ENCODE measurements at regions of chr20 and their contacts with region 1.

Region 1: DNA sequence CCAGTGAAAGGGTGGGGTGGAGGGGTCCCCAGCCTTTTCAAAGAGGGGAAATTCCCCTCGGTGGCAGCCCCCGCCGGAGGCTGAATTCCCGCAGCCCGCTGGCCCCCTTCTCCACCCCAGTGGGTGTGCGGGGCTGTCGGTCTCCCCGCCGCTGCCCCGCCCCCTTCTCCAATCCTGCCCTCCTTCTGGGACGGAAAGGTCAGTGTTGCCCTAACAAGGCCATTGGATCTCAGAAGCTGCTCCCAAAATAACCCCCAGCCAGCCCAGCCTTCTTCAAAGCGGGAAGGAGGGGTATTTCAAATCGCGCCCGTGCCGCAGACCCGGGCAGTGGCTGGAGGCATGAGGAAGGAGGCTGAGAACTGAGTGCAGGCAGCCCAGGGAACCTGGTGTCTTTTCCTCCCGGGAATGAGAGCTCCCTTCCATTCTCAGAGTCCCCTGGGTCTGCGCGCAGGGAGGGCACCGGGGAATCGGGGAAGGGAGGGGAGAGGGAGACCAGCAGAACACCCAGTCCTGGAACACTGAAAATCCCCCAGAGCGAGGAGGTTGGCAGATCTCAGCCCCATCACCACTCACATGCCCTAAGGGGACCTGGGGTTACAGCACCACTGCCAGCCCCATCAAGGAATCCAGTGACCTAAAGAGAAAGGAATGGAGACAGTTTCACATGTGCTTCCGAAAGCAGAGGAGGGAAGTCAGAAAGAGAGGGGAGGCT is at the start of gene JPH2:
- DNase-seq: peak; percentile 44
- H3K4me3 Mint-ChIP-seq: peak within 1 kb of the TSS; percentile 63
- H3K27ac Mint-ChIP-seq: no peak within 1 kb of the TSS
- H3K4me1 Mint-ChIP-seq: peaks cover 16% of the 10 kb centered on the region
- H3K27me3 Mint-ChIP-seq: peaks cover 15% of the 10 kb centered on the region
- CTCF ChIP-seq: no peak
- total RNA-seq, gene JPH2: 0.50 and 0.59 TPM in 2 replicates

Region 2: GRCh38 chr20:43691928-43692524 is 495.2 kb before region 1 on chr20:
- CTCF ChIA-PET with region 1: no interaction called
- intact Hi-C with region 1: no loop called
- DNase-seq: peak; percentile 83
- H3K4me3 Mint-ChIP-seq: no peak overlapping the region
- H3K27ac Mint-ChIP-seq: no peak overlapping the region
- H3K4me1 Mint-ChIP-seq: no peaks in the 10 kb centered on the region
- H3K27me3 Mint-ChIP-seq: no peaks in the 10 kb centered on the region
- CTCF ChIP-seq: peak; percentile 85

Region 3: DNA sequence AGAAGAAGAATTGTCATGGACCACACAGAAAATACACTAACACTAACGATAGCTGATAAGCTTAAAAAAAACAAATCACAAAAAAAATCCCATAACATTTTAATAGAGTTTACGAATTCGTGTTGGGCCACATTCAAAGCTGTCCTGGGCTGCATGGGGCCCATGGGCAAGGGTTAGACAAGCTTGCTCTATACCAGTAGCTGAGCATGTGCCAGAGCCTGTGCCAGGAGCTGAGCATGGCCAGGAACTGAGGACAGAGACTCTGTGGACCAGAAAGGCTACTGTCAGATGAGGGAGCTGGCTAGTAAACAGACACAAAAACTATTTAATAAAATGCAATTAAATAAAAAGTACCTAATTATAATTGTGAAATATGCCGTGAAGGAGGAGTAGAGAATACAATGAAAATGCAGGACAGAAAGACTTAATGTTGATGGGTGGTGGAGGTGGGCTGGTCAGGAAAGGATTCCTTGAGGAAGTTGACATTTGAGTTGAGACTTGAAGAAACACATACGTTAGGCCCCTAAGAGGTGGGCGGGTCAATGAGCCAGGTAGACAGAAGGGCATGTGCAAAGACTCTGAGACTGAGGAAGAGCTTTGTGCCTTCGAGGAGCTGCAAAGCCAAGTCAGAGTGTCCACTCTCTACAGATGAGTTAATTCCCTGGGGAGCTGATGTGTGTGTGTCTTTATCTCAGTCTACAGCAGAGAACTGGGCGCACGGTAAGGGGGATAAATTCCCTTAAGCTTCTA is 66.4 kb before region 1 on chr20:
- CTCF ChIA-PET with region 1: interaction called, 133 read pairs
- intact Hi-C with region 1: loop called (anchors 1 kb)
- DNase-seq: no peak
- H3K4me3 Mint-ChIP-seq: no peak overlapping the region
- H3K27ac Mint-ChIP-seq: no peak overlapping the region
- H3K4me1 Mint-ChIP-seq: no peaks in the 10 kb centered on the region
- H3K27me3 Mint-ChIP-seq: peaks cover 63% of the 10 kb centered on the region
- CTCF ChIP-seq: no peak

Region 4: GRCh38 chr20:44176833-44177534 is 10.2 kb before region 1 on chr20:
- CTCF ChIA-PET with region 1: interaction called, 14 read pairs
- intact Hi-C with region 1: no loop called
- DNase-seq: peak; percentile 78
- H3K4me3 Mint-ChIP-seq: no peak overlapping the region
- H3K27ac Mint-ChIP-seq: no peak overlapping the region
- H3K4me1 Mint-ChIP-seq: peaks cover 20% of the 10 kb centered on the region
- H3K27me3 Mint-ChIP-seq: peaks cover 29% of the 10 kb centered on the region
- CTCF ChIP-seq: no peak

Region 5: GRCh38 chr20:44247586-44248409 is 60.6 kb after region 1 on chr20:
- CTCF ChIA-PET with region 1: no interaction called
- intact Hi-C with region 1: no loop called
- DNase-seq: peak; percentile 68
- H3K4me3 Mint-ChIP-seq: peak overlapping the region; percentile 18
- H3K27ac Mint-ChIP-seq: no peak overlapping the region
- H3K4me1 Mint-ChIP-seq: no peaks in the 10 kb centered on the region
- H3K27me3 Mint-ChIP-seq: peaks cover 85% of the 10 kb centered on the region
- CTCF ChIP-seq: peak; percentile 75

Region 6: GRCh38 chr20:44342248-44342647 is 155.0 kb after region 1 on chr20:
- CTCF ChIA-PET with region 1: no interaction called
- intact Hi-C with region 1: no loop called
- DNase-seq: no peak
- H3K4me3 Mint-ChIP-seq: no peak overlapping the region
- H3K27ac Mint-ChIP-seq: no peak overlapping the region
- H3K4me1 Mint-ChIP-seq: no peaks in the 10 kb centered on the region
- H3K27me3 Mint-ChIP-seq: peaks cover 13% of the 10 kb centered on the region
- CTCF ChIP-seq: no peak